Cardiac septum (tissue), 1 donor: ENCODE measurements at regions of chr4 and their contacts with region 1.

Region 1: DNA sequence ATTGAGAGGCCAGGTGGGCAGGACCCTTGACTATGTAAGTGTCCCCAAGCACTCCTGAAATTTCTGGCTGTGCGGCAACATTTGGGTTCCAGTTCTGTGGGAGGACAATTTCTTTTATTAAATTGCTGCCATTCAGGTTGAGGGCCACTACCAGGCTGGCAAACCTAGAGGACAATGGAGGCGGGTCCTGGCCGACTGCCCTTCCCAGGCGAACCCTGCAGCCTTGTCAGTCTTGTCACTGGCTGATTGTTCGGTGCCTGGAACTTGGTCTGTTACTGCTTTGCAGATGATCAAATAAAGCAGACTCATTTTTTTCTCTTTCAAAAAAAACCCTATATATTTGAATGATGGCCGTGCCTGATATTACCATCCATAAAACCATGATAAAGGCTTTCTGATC is 6.6 kb upstream of the TMEM128 start:
- DNase-seq: no peak

Region 2: GRCh38 chr4:4334798-4335520 is 80.3 kb after region 1 on chr4:
- intact Hi-C with region 1: loop called (anchors 1 kb)
- DNase-seq: peak; percentile 83